ENCODE measurements at regions of chr18 and their contacts with region 1.

Region 1: GRCh38 chr18:46696268-46696667 is 39.2 kb upstream of the LOXHD1 start:
- DNase-seq: peak in 4 of 5 donors; percentile 57 to 76 (median 68)
- ATAC-seq: peak; percentile 80 to 93 (median 88)
- H3K4me3 ChIP-seq: no peak overlapping the region
- H3K27ac ChIP-seq: peak overlapping the region in 8 of 12 donors; percentile 29 to 72 (median 43)
- H3K4me1 ChIP-seq: peaks cover 0 to 10% (median 0%) of the 10 kb centered on the region in 12 donors
- H3K27me3 ChIP-seq: no peaks in the 10 kb centered on the region
- CTCF ChIP-seq: no peak
- POLR2A ChIP-seq: no peak

Region 2: DNA sequence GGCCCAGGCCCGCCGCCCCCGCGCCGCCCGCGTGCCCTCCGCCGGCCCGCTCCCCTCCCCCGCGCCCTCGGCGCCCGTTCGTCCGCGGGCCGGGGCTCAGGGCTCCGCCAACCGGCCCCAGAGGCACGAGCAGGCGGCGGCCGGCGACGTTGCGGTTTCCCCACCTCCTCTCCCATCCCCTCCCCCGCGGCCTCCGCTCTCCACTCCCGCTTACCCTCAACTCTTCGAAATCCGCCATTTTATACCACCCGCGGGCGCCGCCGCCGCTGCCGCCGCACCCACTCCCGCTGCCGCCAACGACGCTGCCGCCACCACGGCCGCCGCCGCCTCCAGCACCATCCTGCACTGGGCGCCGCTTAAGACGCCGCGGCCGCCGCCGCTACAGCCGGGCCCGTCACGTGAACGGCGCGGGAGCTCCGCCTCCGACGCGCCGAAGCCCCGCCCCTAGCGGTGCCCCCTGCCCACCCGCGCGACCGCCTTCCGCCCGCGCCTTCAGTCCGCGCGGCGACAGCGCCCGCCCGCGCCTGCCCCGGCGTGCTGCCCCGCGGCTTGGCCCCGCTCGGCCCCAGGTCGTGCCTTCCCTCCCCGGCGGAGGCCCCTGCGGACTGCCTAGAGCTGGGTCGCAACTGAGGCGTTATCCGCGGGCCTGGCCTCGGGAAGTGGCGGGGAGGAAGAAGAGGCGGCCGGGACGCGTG is 221.0 kb after region 1 on chr18 and contains the starts of genes KATNAL2 and PIAS2:
- intact Hi-C with region 1: loop called in 1 of 10 experiments (anchors 10 kb)
- DNase-seq: peak; percentile 79 to 92 (median 84)
- ATAC-seq: peak; percentile 80 to 96 (median 94)
- H3K4me3 ChIP-seq: peak within 1 kb of the TSS; percentile 47 to 98 (median 77)
- H3K27ac ChIP-seq: peak within 1 kb of the TSS; percentile 54 to 96 (median 91)
- H3K4me1 ChIP-seq: peaks cover 0 to 44% (median 15%) of the 10 kb centered on the region in 12 donors
- H3K27me3 ChIP-seq: no peaks in the 10 kb centered on the region
- CTCF ChIP-seq: peak in 4 of 12 donors; percentile 10 to 27 (median 16)
- POLR2A ChIP-seq: peak; percentile 36 to 91
- total RNA-seq, gene KATNAL2: 0.94 to 5.5 (median 2.0) TPM
- total RNA-seq, gene PIAS2: 14.8 to 40.7 (median 33.3) TPM